ENCODE measurements at regions of chr17 and their contacts with region 1.

Region 1: DNA sequence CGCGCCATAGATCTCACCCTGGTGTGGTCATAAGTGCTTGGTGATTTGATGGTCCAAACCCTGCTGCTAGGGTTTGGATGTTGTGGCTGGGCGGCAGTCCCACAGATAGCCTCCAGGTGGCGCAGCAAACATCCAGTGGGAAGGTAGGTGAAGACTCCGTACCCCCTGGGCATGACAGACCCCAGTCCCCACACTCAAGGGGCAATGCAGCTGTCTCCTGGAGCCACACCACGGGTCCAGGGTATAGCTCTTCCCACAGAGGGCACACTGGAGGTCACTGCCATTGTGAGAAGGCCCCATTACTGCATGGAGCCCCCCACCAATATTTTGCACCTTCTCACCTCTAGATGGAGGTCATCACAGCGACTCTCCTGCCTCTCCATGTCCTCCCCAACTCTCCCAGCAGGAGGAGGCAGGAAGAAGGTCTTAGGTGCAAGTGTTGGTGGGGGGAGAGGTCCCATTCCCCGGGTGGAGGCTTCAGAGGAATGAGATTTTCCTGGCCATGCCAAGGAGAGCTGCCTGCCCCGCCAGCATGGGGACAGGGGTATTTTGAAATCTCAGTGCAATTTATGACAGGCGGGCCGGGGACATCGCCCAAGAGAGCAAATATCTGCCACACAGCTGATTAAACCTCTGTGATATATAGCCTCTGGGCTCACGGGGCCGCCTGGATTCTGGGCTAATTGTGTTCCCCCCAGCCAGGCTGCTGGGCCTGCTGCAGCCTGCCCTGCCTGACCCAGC is 17.1 kb upstream of the C17orf113 start:
- DNase-seq: peak; percentile 53
- H3K4me3 Mint-ChIP-seq: no peak overlapping the region
- H3K27ac Mint-ChIP-seq: no peak overlapping the region
- H3K4me1 Mint-ChIP-seq: peaks cover 33% of the 10 kb centered on the region
- H3K27me3 Mint-ChIP-seq: peaks cover 13% of the 10 kb centered on the region

Region 2: DNA sequence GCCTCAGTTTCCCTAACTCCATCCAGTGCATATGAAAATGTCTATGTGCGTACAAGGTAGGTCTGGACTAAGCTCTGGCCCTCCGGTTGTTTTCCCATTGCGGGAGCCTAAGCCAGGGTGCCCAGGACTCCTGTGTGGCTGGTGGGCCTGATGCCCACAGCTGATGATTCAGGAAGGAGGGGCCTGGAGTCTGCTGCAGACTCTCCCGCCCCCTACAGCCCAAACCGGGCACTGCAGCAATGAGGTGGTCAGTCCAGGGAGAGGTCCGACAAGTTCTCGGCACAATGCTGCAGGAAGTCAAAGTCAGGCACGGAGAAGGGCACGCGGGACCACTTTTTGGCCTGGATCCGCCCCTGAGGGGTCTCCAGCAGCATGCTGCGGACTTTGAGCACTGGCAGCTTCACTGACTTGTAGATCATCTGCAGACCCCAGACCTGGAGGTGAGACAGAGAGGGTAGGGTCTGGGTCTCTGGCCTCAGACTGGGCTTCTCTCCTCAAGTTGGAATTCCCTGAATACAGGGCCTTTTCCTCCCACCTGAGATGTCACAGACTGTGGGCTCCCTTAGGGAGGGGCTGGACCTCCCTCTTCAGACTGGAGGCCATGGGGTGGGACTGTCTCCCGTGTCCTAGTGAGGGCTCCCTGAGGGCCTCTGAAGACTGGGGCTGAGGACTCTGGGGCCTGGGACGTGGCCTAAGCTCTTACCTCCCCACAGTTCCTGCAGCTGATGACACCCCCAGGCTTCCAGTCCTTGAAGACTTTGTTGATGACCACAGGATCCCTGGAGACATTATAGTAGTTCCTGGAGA is 34.2 kb after region 1 on chr17:
- intact Hi-C with region 1: loop called (anchors 1 kb)
- DNase-seq: peak; percentile 50
- H3K4me3 Mint-ChIP-seq: no peak overlapping the region
- H3K27ac Mint-ChIP-seq: no peak overlapping the region
- H3K4me1 Mint-ChIP-seq: peaks cover 7% of the 10 kb centered on the region
- H3K27me3 Mint-ChIP-seq: peaks cover 16% of the 10 kb centered on the region

Region 3: DNA sequence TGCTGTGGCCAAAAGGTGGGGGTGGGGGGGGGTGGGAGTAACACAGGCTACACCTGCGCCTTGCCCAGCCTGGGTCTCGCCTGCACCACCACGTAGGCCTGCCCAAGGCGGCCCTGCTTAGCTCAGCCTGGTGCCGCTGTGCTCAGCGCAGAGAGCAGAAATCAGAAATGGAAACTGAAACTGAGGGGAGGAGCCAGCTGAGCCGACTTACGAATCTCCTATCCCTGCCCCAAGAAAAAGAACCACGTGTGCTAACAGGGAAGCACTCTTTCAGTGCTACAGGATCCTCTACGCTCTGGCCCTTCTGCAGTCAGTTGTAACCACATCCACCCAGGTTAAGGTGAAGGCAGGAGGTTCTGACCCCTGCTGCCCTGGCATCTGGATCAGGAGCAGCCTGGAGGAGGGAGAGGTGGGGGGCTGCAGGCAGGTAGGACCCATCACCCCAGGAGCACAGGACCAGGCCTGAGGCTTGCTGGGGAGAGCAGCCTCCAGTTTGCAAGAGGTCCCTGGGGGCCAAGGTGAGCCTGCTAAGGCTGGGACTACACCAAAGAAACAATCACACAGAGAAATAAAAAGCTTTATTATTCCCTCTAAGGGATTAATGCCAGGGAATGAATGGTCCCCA is 45.1 kb after region 1 on chr17 and contains the start of gene DHX58:
- intact Hi-C with region 1: loop called (anchors 1 kb)
- DNase-seq: peak; percentile 83
- H3K4me3 Mint-ChIP-seq: peak within 1 kb of the TSS; percentile 85
- H3K27ac Mint-ChIP-seq: peak within 1 kb of the TSS; percentile 86
- H3K4me1 Mint-ChIP-seq: peaks cover 50% of the 10 kb centered on the region
- H3K27me3 Mint-ChIP-seq: no peaks in the 10 kb centered on the region
- total RNA-seq, gene DHX58: 26.9 and 28.4 TPM in 2 replicates

Measured in activated T-helper 1 cell treated with anti-CD3 and anti-CD28 coated beads, Interleukin-12 subunit alpha, Interleukin-12 subunit beta, Interleukin-2, Interleukin-4 antibody, amounts not matched to agents 30 ng/mL and 10 ng/mL and 1 ng/mL, durations not matched to agents 14 hours and 24 hours and 36 hours (primary cell).